Posterior vena cava (tissue), 2 donors: ENCODE measurements at regions of chr5 and their contacts with region 1.

Region 1: GRCh38 chr5:161847941-161848391 is at the start of gene GABRA1:
- DNase-seq: no peak
- total RNA-seq, gene GABRA1: not detected

Region 2: GRCh38 chr5:161460741-161461140 is 387.2 kb before region 1 on chr5:
- intact Hi-C with region 1: no loop called
- DNase-seq: no peak

Region 3: DNA sequence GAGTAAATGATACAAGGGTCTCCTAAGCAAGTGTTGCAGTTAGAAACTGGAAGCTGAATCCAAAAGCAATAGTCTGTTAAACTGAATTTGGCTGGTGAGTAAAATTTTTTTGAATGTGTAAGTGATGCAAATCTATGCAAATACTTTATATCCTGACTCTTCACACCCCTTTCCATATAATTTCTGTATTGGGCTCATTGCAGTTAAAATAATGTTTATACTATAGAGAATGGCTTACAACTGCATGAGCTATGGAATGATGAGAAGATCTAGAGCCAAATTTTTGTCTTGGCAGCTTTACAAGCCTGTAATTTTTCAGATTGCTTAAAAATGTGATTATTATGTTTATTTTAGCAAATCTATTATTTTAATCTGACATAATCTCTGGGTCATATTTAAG is 57.0 kb before region 1 on chr5:
- intact Hi-C with region 1: loop called in 1 of 2 experiments (anchors 2 kb)
- DNase-seq: no peak